Mammary epithelial cell (primary cell): ENCODE measurements at regions of chr14 and their contacts with region 1.

Region 1: DNA sequence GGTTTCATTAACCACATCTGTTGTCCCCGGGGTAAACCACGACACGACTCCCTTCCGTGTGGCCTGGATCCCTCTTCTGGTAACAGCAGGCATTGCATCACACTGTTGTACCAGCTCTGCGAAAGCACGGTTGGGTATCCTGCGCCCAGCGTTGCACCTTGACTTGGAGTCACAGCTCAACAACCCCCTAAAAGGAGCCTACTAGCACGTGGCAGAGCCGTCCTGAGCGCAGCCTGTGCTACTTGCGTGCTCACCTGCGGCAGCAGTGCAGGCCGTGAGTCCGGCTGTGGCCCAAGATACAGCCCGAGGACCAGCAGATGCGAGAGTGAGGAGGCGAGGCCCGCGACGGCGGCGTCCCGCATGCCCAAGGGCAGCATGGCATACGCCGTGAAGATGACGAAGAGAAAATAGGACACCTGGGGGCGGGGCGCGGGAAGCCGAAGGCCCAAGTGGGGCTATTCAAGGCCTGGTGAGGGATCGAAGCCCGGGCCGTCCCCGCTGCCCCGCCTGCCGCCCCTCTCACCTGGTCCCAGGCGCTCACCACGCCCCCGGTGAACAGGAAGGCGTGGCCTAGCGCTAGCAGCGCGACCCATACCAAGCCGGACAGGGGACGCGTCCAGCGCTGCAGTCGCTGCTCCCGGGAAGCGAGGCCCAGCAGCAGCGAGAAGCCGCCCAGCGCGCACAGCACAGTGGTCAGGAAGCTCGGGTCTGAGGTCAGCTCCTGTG is 2.4 kb downstream of the ADCY4 start:
- DNase-seq: peak; percentile 63
- H3K4me3 ChIP-seq: peak overlapping the region in 2 of 3 experiments; percentile 9 to 28
- H3K27ac ChIP-seq: no peak overlapping the region
- H3K4me1 ChIP-seq: peaks cover 22% of the 10 kb centered on the region
- H3K27me3 ChIP-seq: peaks cover 13% of the 10 kb centered on the region
- CTCF ChIP-seq: peak; percentile 74 to 82

Region 2: DNA sequence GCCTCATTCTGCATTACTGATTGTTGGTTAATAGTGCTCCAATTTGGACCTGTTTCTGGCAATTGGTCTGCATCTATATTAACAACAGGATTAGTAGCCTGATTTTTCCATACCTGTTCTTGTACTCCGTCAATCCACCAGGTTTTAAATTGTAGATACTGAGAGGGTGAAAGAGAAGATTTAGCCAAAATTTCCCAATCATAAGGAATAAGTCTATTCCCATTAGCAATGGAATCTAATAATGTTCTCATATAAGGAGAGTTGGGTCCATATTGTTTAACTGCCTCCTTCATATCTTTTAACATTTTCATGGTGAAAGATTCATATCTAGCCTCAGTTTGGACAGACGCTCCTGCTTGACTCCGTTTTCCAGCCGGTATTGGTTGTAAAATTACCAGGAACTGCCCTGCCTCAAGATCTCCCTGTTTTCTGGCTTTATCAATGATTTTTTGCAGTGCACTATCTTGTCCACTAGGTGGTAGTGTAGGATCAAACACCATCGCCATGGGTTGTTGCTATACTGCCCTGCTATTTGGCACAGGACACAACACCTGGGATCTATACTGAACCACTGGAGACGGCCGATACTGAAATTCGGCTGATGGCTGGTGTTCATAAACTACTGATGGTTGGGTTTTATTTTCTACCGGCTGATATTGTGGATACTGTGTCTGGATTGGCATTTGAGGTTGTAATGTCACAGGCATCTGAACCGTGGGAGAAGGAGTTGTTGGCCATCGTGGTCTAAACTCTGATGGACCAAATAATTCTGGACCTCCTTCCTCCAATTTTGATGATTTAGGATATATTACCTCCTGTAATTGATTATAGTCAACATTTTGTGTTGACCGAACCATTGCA is 318.5 kb before region 1 on chr14:
- CTCF ChIA-PET with region 1: no interaction called
- dilution Hi-C with region 1: no loop called
- in situ Hi-C with region 1: no loop called
- intact Hi-C with region 1: loop called (anchors 2 kb)
- DNase-seq: peak; percentile 65
- H3K4me3 ChIP-seq: no peak overlapping the region
- H3K27ac ChIP-seq: no peak overlapping the region
- H3K4me1 ChIP-seq: no peaks in the 10 kb centered on the region
- H3K27me3 ChIP-seq: no peaks in the 10 kb centered on the region
- CTCF ChIP-seq: peak; percentile 86 to 90

Region 3: DNA sequence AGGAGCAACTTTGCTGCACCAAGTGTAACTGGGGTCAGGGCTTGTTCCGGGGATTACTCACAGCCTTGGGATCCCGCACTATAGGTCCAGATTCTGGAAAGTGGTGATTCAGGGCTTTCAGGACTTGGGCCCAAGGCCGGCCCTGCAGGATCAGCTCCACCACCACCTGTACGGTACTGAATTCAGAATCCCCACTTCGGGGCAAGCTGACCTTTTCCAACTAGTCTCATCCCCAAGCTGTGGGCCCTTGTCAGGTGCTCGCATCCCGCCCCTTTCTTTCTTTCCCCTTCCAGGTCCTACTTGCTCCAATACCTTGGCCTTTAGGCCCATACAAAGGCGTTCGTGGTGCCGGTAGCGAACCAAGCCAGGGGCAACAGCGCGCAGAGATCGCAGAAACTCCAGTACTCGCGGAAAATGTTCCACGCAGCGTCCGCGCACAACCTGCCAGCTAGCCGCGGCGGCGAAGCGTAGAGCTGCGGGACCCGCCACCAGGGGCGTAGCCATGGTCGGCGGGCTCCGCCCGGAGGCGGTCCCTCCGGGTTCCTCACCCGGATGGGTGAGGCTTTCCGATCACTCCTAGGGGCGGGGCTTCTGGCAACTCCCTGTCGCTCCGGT is 90.5 kb before region 1 on chr14:
- CTCF ChIA-PET with region 1: no interaction called
- dilution Hi-C with region 1: no loop called
- in situ Hi-C with region 1: no loop called
- intact Hi-C with region 1: loop called (anchors 1 kb)
- DNase-seq: peak; percentile 93
- H3K4me3 ChIP-seq: peak overlapping the region; percentile 54 to 71 (median 63)
- H3K27ac ChIP-seq: peak overlapping the region; percentile 97
- H3K4me1 ChIP-seq: peaks cover 44% of the 10 kb centered on the region
- H3K27me3 ChIP-seq: no peaks in the 10 kb centered on the region
- CTCF ChIP-seq: peak in 1 of 2 donors; percentile 51

Region 4: DNA sequence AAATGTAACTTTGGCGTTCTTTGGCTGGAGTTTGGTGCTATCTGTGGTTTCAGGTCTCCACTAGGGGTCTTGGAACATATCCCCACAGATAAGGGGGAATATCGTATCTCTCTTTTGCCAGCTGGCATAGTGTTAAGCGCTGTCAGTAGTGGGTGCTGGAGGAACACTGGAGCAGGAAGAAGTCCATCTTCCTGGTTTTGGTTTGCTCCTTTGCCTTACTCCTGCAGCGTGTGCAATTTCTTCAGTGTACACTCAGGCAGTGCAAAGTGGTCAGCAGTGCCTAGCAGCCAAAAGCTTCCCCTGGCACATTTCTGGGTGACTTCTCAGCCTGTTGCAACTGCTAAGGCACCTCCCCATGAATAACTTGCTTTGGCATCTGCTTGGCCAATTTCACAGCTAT is 19.1 kb after region 1 on chr14:
- CTCF ChIA-PET with region 1: interaction called, 4 read pairs
- dilution Hi-C with region 1: no loop called
- in situ Hi-C with region 1: no loop called
- intact Hi-C with region 1: loop called (anchors 1 kb)
- DNase-seq: peak; percentile 43
- H3K4me3 ChIP-seq: no peak overlapping the region
- H3K27ac ChIP-seq: no peak overlapping the region
- H3K4me1 ChIP-seq: peaks cover 2% of the 10 kb centered on the region
- H3K27me3 ChIP-seq: no peaks in the 10 kb centered on the region
- CTCF ChIP-seq: no peak

Region 5: GRCh38 chr14:24366721-24367513 is 34.5 kb after region 1 on chr14:
- CTCF ChIA-PET with region 1: no interaction called
- dilution Hi-C with region 1: loop called (anchors 5 kb)
- in situ Hi-C with region 1: no loop called
- intact Hi-C with region 1: loop called (anchors 1 kb)
- DNase-seq: peak; percentile 75
- H3K4me3 ChIP-seq: peak overlapping the region; percentile 45 to 56 (median 46)
- H3K27ac ChIP-seq: no peak overlapping the region
- H3K4me1 ChIP-seq: peaks cover 27% of the 10 kb centered on the region
- H3K27me3 ChIP-seq: no peaks in the 10 kb centered on the region
- CTCF ChIP-seq: no peak

Region 6: DNA sequence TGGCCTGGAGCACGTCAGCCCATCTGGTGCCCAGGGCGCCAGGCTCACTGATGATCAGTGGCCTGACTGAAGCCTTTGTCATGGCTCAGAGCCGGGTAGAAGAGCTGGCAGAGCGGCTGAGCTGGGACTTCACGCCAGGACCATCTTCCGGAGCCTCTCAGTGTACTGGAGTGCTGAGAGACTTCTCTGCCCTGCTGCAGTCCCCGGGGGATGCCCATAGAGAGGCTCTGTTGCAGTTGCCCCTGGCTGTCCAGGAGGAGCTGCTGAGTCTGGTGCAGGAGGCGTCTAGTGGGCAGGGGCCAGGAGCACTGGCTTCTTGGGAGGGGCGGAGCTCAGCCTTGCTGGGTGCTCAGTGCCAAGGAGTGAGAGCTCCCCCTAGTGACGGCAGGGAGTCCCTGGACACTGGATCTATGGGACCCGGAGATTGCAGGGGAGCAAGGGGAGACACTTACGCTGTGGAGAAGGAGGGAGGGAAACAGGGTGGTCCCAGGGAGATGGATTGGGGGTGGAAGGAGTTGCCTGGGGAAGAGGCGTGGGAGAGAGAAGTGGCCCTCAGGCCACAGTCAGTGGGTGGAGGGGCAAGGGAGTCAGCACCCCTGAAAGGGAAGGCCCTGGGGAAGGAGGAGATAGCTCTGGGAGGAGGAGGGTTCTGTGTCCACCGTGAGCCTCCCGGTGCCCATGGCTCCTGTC is 99.3 kb after region 1 on chr14:
- CTCF ChIA-PET with region 1: interaction called, 31 read pairs
- dilution Hi-C with region 1: loop called (anchors 5 kb)
- in situ Hi-C with region 1: loop called (anchors 5 kb)
- intact Hi-C with region 1: loop called (anchors 1 kb)
- DNase-seq: peak; percentile 84
- H3K4me3 ChIP-seq: peak overlapping the region in 2 of 3 experiments; percentile 64 to 75
- H3K27ac ChIP-seq: peak overlapping the region; percentile 73
- H3K4me1 ChIP-seq: peaks cover 35% of the 10 kb centered on the region
- H3K27me3 ChIP-seq: no peaks in the 10 kb centered on the region
- CTCF ChIP-seq: peak; percentile 98

Region 7: GRCh38 chr14:24456980-24457379 is 124.5 kb after region 1 on chr14:
- CTCF ChIA-PET with region 1: no interaction called
- dilution Hi-C with region 1: no loop called
- in situ Hi-C with region 1: no loop called
- intact Hi-C with region 1: no loop called
- DNase-seq: peak; percentile 49
- H3K4me3 ChIP-seq: no peak overlapping the region
- H3K27ac ChIP-seq: no peak overlapping the region
- H3K4me1 ChIP-seq: no peaks in the 10 kb centered on the region
- H3K27me3 ChIP-seq: no peaks in the 10 kb centered on the region
- CTCF ChIP-seq: no peak